ENCODE measurements at regions of chr12 and their contacts with region 1.

Region 1: GRCh38 chr12:20985399-20985798 is 145.6 kb upstream of the SLCO1B1 start:
- DNase-seq: peak in 1 of 9 experiments; percentile 18
- ATAC-seq: no peak
- H3K4me3 ChIP-seq: no peak overlapping the region
- H3K4me3 Mint-ChIP-seq: no peak overlapping the region
- H3K27ac ChIP-seq: no peak overlapping the region
- H3K27ac Mint-ChIP-seq: no peak overlapping the region
- H3K4me1 ChIP-seq: no peaks in the 10 kb centered on the region
- H3K4me1 Mint-ChIP-seq: no peaks in the 10 kb centered on the region
- H3K27me3 ChIP-seq: no peaks in the 10 kb centered on the region
- H3K27me3 Mint-ChIP-seq: no peaks in the 10 kb centered on the region
- CTCF ChIP-seq: no peak

Region 2: GRCh38 chr12:20917269-20917668 is 68.1 kb before region 1 on chr12:
- CTCF ChIA-PET with region 1: no interaction called
- POLR2A ChIA-PET with region 1: no interaction called
- intact Hi-C with region 1: loop called in 1 of 2 experiments (anchors 1 kb)
- DNase-seq: no peak
- ATAC-seq: no peak
- H3K4me3 ChIP-seq: no peak overlapping the region
- H3K4me3 Mint-ChIP-seq: no peak overlapping the region
- H3K27ac ChIP-seq: no peak overlapping the region
- H3K27ac Mint-ChIP-seq: no peak overlapping the region
- H3K4me1 ChIP-seq: no peaks in the 10 kb centered on the region
- H3K4me1 Mint-ChIP-seq: no peaks in the 10 kb centered on the region
- H3K27me3 ChIP-seq: no peaks in the 10 kb centered on the region
- H3K27me3 Mint-ChIP-seq: no peaks in the 10 kb centered on the region
- CTCF ChIP-seq: no peak

Region 3: DNA sequence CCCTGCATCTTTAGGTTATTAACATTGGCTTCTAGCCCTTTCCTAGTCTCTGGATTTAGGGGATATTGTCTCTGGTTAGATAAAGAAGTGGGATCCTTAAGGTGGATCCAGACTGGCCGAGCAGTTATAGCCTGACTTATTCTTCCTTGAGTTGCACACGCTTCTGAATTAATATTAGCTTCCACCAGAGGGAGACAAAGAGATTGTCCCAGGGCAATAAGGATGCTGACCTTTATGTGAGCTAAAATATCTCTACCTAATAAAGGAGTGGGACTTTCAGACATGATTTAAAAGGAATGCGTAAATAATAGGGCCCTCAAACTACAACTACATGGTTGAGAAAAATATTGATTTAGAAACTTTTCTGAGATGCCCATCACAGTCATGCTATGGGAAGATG is 35.2 kb before region 1 on chr12:
- CTCF ChIA-PET with region 1: no interaction called
- POLR2A ChIA-PET with region 1: no interaction called
- intact Hi-C with region 1: no loop called
- DNase-seq: peak in 1 of 9 experiments; percentile 5
- ATAC-seq: no peak
- H3K4me3 ChIP-seq: no peak overlapping the region
- H3K4me3 Mint-ChIP-seq: no peak overlapping the region
- H3K27ac ChIP-seq: no peak overlapping the region
- H3K27ac Mint-ChIP-seq: no peak overlapping the region
- H3K4me1 ChIP-seq: no peaks in the 10 kb centered on the region
- H3K4me1 Mint-ChIP-seq: no peaks in the 10 kb centered on the region
- H3K27me3 ChIP-seq: no peaks in the 10 kb centered on the region
- H3K27me3 Mint-ChIP-seq: no peaks in the 10 kb centered on the region
- CTCF ChIP-seq: no peak

Region 4: DNA sequence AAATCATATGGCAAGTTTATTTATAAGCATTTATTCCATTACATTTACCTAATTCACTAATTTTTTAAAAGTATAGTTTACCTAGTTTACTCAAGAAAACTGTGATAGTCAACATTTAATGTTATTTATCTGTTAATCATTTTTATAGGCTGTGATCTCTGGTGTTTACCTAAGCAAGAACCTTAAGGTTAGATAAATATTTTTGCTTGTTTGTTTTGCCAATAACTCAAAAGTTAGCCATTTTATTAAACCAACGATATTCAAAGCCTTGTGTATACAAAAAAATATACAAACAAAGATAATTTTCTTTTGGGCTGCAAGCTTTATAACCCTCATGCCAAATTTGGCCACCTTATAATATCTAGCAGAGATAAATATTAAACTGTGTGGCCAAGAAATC is 17.6 kb before region 1 on chr12:
- CTCF ChIA-PET with region 1: no interaction called
- POLR2A ChIA-PET with region 1: no interaction called
- intact Hi-C with region 1: loop called in 1 of 2 experiments (anchors 1 kb)
- DNase-seq: no peak
- ATAC-seq: no peak
- H3K4me3 ChIP-seq: no peak overlapping the region
- H3K4me3 Mint-ChIP-seq: no peak overlapping the region
- H3K27ac ChIP-seq: no peak overlapping the region
- H3K27ac Mint-ChIP-seq: no peak overlapping the region
- H3K4me1 ChIP-seq: no peaks in the 10 kb centered on the region
- H3K4me1 Mint-ChIP-seq: no peaks in the 10 kb centered on the region
- H3K27me3 ChIP-seq: no peaks in the 10 kb centered on the region
- H3K27me3 Mint-ChIP-seq: no peaks in the 10 kb centered on the region
- CTCF ChIP-seq: no peak

Region 5: DNA sequence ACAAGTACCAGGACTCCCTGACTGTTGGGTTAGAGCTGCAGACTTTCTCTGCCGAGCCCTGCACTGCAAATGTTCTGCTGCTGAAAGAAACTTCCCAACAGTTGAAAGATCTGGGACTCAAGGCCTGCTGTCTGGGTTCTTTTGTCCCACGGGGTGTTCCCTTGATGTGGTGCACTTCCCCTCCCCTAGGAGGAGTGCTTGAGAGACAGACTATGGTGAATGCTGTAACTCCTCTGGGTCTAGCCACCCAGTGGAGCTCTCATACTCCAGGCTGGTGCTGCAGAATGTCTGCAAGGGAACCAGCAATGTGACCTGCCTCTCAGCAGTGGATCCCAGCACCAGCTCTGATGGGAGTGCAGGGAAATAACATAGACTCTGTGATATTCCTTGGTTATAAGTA is 16.4 kb after region 1 on chr12:
- CTCF ChIA-PET with region 1: no interaction called
- POLR2A ChIA-PET with region 1: no interaction called
- intact Hi-C with region 1: no loop called
- DNase-seq: no peak
- ATAC-seq: no peak
- H3K4me3 ChIP-seq: no peak overlapping the region
- H3K4me3 Mint-ChIP-seq: no peak overlapping the region
- H3K27ac ChIP-seq: no peak overlapping the region
- H3K27ac Mint-ChIP-seq: no peak overlapping the region
- H3K4me1 ChIP-seq: no peaks in the 10 kb centered on the region
- H3K4me1 Mint-ChIP-seq: no peaks in the 10 kb centered on the region
- H3K27me3 ChIP-seq: no peaks in the 10 kb centered on the region
- H3K27me3 Mint-ChIP-seq: no peaks in the 10 kb centered on the region
- CTCF ChIP-seq: no peak

Region 6: GRCh38 chr12:21073822-21074460 is 88.5 kb after region 1 on chr12:
- CTCF ChIA-PET with region 1: no interaction called
- POLR2A ChIA-PET with region 1: no interaction called
- intact Hi-C with region 1: no loop called
- DNase-seq: no peak
- ATAC-seq: no peak
- H3K4me3 ChIP-seq: no peak overlapping the region
- H3K4me3 Mint-ChIP-seq: no peak overlapping the region
- H3K27ac ChIP-seq: no peak overlapping the region
- H3K27ac Mint-ChIP-seq: no peak overlapping the region
- H3K4me1 ChIP-seq: no peaks in the 10 kb centered on the region
- H3K4me1 Mint-ChIP-seq: no peaks in the 10 kb centered on the region
- H3K27me3 ChIP-seq: no peaks in the 10 kb centered on the region
- H3K27me3 Mint-ChIP-seq: no peaks in the 10 kb centered on the region
- CTCF ChIP-seq: no peak

Region 7: DNA sequence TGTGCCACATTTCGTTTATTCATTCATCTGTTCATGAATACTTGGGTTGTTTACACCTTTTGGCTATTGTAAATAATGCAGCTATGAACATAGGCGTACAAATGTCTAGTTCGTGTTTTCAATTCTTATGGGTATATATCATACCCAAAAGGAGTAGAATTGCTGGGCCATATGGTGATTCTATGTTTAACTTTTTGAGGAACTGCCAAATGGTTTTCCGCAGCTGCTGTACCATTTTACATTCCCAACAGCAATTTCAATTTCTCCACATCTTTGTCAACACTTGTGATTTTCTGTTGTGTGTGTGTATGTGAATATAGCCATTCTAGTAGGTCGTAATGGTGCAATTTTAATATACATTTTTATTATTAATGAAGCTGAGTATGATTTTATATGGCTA is 1965.8 kb after region 1 on chr12:
- CTCF ChIA-PET with region 1: no interaction called
- POLR2A ChIA-PET with region 1: no interaction called
- intact Hi-C with region 1: no loop called
- DNase-seq: no peak
- ATAC-seq: no peak
- H3K4me3 ChIP-seq: no peak overlapping the region
- H3K4me3 Mint-ChIP-seq: no peak overlapping the region
- H3K27ac ChIP-seq: no peak overlapping the region
- H3K27ac Mint-ChIP-seq: no peak overlapping the region
- H3K4me1 ChIP-seq: no peaks in the 10 kb centered on the region
- H3K4me1 Mint-ChIP-seq: no peaks in the 10 kb centered on the region
- H3K27me3 ChIP-seq: no peaks in the 10 kb centered on the region
- H3K27me3 Mint-ChIP-seq: no peaks in the 10 kb centered on the region
- CTCF ChIP-seq: no peak